WTC11 (cell line): ENCODE measurements at regions of chr14 and their contacts with region 1.

Region 1: DNA sequence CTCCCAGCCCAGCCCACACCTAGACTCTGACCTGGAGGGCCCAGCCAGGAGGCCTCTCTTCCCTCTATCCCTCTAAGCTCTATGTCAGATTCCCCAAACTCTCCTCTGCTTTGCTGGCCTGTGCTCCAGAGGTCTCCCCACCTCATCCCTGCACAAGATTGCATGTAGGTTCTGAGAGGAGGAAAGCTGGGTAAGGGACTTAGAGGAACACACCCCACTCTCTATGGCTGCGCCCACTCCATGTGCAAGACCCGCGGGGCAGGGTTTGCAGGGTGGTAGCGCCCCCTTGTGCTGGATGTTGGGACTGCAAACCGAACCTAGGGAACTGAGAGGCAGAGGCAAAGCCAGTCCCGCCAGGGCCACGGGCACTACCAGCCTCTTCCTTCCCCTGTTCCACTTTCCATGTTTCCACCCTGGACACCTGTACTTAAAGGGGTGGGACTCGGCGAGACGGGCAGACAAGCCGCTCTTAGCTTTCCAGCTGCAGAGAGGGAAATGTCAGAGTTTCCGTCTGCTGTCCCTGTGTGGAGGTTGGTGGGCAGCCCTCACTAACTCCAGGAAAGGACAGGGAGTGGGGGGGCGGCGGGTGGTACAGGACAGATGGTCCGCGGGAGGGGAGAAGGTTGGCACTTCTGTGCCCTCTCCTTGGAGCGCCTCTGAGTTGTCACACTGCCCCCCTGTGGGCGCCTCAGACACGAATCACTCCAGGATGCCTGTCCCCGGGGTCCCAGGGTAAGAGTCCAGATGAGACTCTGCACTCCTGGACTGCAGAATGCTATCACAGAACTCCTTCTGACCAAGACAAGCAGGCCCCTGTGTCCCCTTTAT is 16.8 kb downstream of the MMP14 start:
- DNase-seq: peak; percentile 98
- ATAC-seq: peak; percentile 85
- H3K4me3 Mint-ChIP-seq: peak overlapping the region; percentile 68
- H3K27ac Mint-ChIP-seq: peak overlapping the region; percentile 87
- H3K4me1 Mint-ChIP-seq: peaks cover 18% of the 10 kb centered on the region
- H3K27me3 Mint-ChIP-seq: no peaks in the 10 kb centered on the region
- CTCF ChIP-seq: peak; percentile 100

Region 2: GRCh38 chr14:22653012-22653621 is 200.0 kb before region 1 on chr14:
- CTCF ChIA-PET with region 1: interaction called, 10 read pairs
- POLR2A ChIA-PET with region 1: no interaction called
- DNase-seq: peak; percentile 86
- ATAC-seq: peak; percentile 99
- H3K4me3 Mint-ChIP-seq: no peak overlapping the region
- H3K27ac Mint-ChIP-seq: no peak overlapping the region
- H3K4me1 Mint-ChIP-seq: 0 out of 2 replicates have a peak, but pooled peaks cover 3% of the 10 kb centered on the region
- H3K27me3 Mint-ChIP-seq: no peaks in the 10 kb centered on the region; the same call in 1 of the 2 replicates
- CTCF ChIP-seq: peak; percentile 68

Region 3: DNA sequence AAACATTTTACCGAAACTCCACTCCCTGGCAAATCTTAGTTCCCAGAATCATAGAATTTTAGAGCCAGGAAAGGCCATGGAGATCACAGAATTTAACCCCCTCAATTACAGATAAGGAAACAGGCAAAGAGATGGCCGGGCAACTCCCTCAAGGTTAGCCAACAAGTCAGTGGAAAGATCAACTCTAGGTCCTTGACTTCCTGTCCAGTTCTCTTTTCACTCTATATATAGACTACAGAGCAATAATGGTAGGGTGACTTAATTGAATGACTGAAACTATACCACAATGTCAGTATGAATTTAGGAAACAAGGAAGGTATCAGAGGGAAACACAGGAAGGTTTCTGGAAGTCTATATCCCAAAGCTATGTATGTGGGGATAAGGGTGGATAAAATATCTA is 75.1 kb before region 1 on chr14:
- CTCF ChIA-PET with region 1: interaction called, 12 read pairs
- POLR2A ChIA-PET with region 1: no interaction called
- DNase-seq: no peak
- ATAC-seq: no peak
- H3K4me3 Mint-ChIP-seq: no peak overlapping the region
- H3K27ac Mint-ChIP-seq: no peak overlapping the region
- H3K4me1 Mint-ChIP-seq: peaks cover 5% of the 10 kb centered on the region; the same call in 1 of the 2 replicates
- H3K27me3 Mint-ChIP-seq: no peaks in the 10 kb centered on the region
- CTCF ChIP-seq: no peak

Region 4: DNA sequence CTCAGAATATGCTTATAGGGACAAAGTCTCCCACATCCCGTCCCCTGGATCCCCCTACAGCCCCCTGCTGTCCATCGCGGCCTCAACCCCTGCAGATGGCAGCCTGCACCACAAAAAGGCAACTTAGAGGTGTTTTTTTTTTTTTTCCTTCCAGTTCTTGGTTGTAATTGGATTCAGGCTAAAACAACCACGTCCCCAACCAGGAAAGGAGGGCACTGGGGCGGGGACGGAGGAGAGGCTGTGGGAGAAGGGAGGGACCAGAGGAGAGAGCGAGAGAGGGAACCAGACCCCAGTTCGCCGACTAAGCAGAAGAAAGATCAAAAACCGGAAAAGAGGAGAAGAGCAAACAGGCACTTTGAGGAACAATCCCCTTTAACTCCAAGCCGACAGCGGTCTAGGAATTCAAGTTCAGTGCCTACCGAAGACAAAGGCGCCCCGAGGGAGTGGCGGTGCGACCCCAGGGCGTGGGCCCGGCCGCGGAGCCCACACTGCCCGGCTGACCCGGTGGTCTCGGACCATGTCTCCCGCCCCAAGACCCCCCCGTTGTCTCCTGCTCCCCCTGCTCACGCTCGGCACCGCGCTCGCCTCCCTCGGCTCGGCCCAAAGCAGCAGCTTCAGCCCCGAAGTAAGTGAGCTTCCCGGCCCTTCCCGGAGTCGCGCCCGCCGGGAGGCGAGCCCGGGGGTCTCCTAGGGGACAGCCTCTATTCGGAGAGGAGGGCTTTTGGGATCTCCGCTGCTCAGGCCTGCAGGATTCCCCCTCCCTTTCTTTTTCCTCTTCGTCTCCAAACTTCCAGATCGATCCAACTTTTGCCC is 16.6 kb before region 1 on chr14 and contains the start of gene MMP14:
- CTCF ChIA-PET with region 1: interaction called, 136 read pairs
- POLR2A ChIA-PET with region 1: interaction called, 7 read pairs
- DNase-seq: peak; percentile 62
- ATAC-seq: peak; percentile 66
- H3K4me3 Mint-ChIP-seq: peak within 1 kb of the TSS; percentile 100
- H3K27ac Mint-ChIP-seq: peak within 1 kb of the TSS; percentile 98
- H3K4me1 Mint-ChIP-seq: peaks cover 29% of the 10 kb centered on the region
- H3K27me3 Mint-ChIP-seq: no peaks in the 10 kb centered on the region; the same call in 1 of the 2 replicates
- CTCF ChIP-seq: no peak
- total RNA-seq, gene MMP14: 81.6 to 94.4 TPM (median 83.9 TPM) in 3 replicates

Region 5: DNA sequence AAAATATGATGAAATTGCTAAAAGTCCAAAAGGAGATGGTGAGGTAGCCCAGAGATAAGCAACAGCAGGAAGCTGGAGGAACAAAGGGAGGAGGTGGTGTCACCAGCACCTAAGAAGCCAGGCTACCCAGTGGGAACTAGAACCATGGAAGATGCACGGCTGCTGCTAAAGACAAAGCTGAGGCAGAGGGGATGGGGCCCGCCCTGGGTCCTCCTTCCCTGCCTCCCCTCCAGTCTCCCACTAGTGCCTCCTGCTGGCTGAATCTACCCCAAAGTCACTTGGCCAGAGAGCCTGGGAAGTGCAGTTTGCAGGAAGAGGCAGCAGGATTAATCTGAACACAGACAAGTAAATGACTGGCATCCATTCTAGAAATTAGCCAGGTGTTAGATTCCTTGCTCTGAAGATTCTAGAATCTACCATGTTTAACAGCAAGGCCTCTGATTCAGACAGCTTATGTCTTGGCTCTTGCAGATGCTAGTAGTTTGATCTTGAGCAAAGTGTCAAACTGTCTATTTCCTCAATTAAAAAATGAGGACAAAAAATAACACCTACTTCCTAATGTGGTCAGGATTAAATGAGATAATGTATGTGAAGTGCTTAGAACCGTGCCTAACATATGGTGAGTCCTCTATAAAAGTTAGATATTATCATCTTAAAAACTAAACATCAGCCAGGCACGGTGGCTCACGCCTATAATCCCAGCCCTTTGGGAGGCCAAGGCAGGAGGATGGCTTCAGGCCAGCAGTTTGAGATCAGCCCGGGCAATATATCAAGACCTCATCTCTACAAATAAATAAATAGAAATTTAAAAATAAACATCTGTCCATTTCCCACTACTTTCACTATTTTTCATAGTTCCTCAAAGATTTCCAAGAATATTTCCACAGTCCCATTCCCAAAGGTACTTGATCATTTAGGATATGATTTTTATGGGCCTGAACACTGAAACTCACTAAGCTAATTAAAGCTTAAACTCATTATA is 12.6 kb after region 1 on chr14:
- CTCF ChIA-PET with region 1: interaction called, 23 read pairs
- POLR2A ChIA-PET with region 1: no interaction called
- DNase-seq: peak; percentile 84
- ATAC-seq: peak; percentile 96
- H3K4me3 Mint-ChIP-seq: no peak overlapping the region
- H3K27ac Mint-ChIP-seq: peak overlapping the region; percentile 31; the same call in 1 of the 2 replicates
- H3K4me1 Mint-ChIP-seq: peaks cover 13% of the 10 kb centered on the region
- H3K27me3 Mint-ChIP-seq: no peaks in the 10 kb centered on the region
- CTCF ChIP-seq: peak; percentile 47

Region 6: GRCh38 chr14:22886500-22887259 is 33.5 kb after region 1 on chr14:
- CTCF ChIA-PET with region 1: interaction called, 15 read pairs
- POLR2A ChIA-PET with region 1: no interaction called
- DNase-seq: peak; percentile 80
- ATAC-seq: peak; percentile 46
- H3K4me3 Mint-ChIP-seq: peak overlapping the region; percentile 88
- H3K27ac Mint-ChIP-seq: peak overlapping the region; percentile 97
- H3K4me1 Mint-ChIP-seq: peaks cover 41% of the 10 kb centered on the region
- H3K27me3 Mint-ChIP-seq: peaks cover 30% of the 10 kb centered on the region
- CTCF ChIP-seq: no peak

Region 7: GRCh38 chr14:22900081-22900799 is 47.1 kb after region 1 on chr14:
- CTCF ChIA-PET with region 1: interaction called, 15 read pairs
- POLR2A ChIA-PET with region 1: no interaction called
- DNase-seq: peak; percentile 28
- ATAC-seq: peak; percentile 79
- H3K4me3 Mint-ChIP-seq: no peak overlapping the region
- H3K27ac Mint-ChIP-seq: no peak overlapping the region
- H3K4me1 Mint-ChIP-seq: peaks cover 8% of the 10 kb centered on the region
- H3K27me3 Mint-ChIP-seq: peaks cover 49% of the 10 kb centered on the region
- CTCF ChIP-seq: 0 out of 2 replicates have a peak, but pooled peaks have one; percentile 27

Region 8: GRCh38 chr14:23160924-23161538 is 307.9 kb after region 1 on chr14:
- CTCF ChIA-PET with region 1: no interaction called
- POLR2A ChIA-PET with region 1: no interaction called
- DNase-seq: peak; percentile 88
- ATAC-seq: peak; percentile 94
- H3K4me3 Mint-ChIP-seq: peak overlapping the region; percentile 53
- H3K27ac Mint-ChIP-seq: peak overlapping the region; percentile 98
- H3K4me1 Mint-ChIP-seq: peaks cover 65% of the 10 kb centered on the region
- H3K27me3 Mint-ChIP-seq: no peaks in the 10 kb centered on the region
- CTCF ChIP-seq: no peak